Naive thymus-derived CD4-positive, alpha-beta T cell (primary cell): ENCODE measurements at regions of chr17 and their contacts with region 1.

Region 1: GRCh38 chr17:21043286-21044232 is 748 bp upstream of the USP22 start:
- DNase-seq: peak; percentile 87 to 99 (median 96)
- ATAC-seq: peak; percentile 88
- H3K4me3 ChIP-seq: peak overlapping the region; percentile 73
- H3K4me3 Mint-ChIP-seq: peak overlapping the region; percentile 75 to 96 (median 86)
- H3K27ac ChIP-seq: peak overlapping the region; percentile 91
- H3K27ac Mint-ChIP-seq: peak overlapping the region; percentile 90 to 97 (median 93)
- H3K4me1 ChIP-seq: peaks cover 12 to 22% of the 10 kb centered on the region in 2 donors
- H3K4me1 Mint-ChIP-seq: peaks cover 15 to 40% (median 31%) of the 10 kb centered on the region in 7 donors
- H3K27me3 ChIP-seq: no peaks in the 10 kb centered on the region
- H3K27me3 Mint-ChIP-seq: peaks cover 0 to 4% (median 0%) of the 10 kb centered on the region in 5 donors

Region 2: GRCh38 chr17:19377602-19378392 is 1665.8 kb before region 1 on chr17:
- CTCF ChIA-PET with region 1: no interaction called
- POLR2A ChIA-PET with region 1: no interaction called
- intact Hi-C with region 1: loop called in 1 of 2 experiments (anchors 5 kb)
- DNase-seq: peak; percentile 85 to 95 (median 92)
- ATAC-seq: peak; percentile 89
- H3K4me3 ChIP-seq: peak overlapping the region; percentile 99
- H3K4me3 Mint-ChIP-seq: peak overlapping the region; percentile 83 to 100 (median 97)
- H3K27ac ChIP-seq: peak overlapping the region; percentile 81
- H3K27ac Mint-ChIP-seq: peak overlapping the region; percentile 83 to 99 (median 97)
- H3K4me1 ChIP-seq: peaks cover 2 to 6% of the 10 kb centered on the region in 2 donors
- H3K4me1 Mint-ChIP-seq: peaks cover 6 to 29% (median 20%) of the 10 kb centered on the region in 7 donors
- H3K27me3 ChIP-seq: no peaks in the 10 kb centered on the region
- H3K27me3 Mint-ChIP-seq: no peaks in the 10 kb centered on the region

Region 3: GRCh38 chr17:20944014-20944865 is 99.3 kb before region 1 on chr17:
- CTCF ChIA-PET with region 1: no interaction called
- POLR2A ChIA-PET with region 1: no interaction called
- intact Hi-C with region 1: loop called in 1 of 2 experiments (anchors 1 kb)
- DNase-seq: peak in 5 of 9 donors; percentile 23 to 36 (median 25)
- ATAC-seq: peak; percentile 69
- H3K4me3 ChIP-seq: no peak overlapping the region
- H3K4me3 Mint-ChIP-seq: no peak overlapping the region
- H3K27ac ChIP-seq: no peak overlapping the region
- H3K27ac Mint-ChIP-seq: peak overlapping the region in 1 of 9 donors; percentile 29
- H3K4me1 ChIP-seq: no peaks in the 10 kb centered on the region
- H3K4me1 Mint-ChIP-seq: peaks cover 0 to 4% (median 0%) of the 10 kb centered on the region in 7 donors
- H3K27me3 ChIP-seq: no peaks in the 10 kb centered on the region
- H3K27me3 Mint-ChIP-seq: peaks cover 0 to 13% (median 5%) of the 10 kb centered on the region in 5 donors

Region 4: DNA sequence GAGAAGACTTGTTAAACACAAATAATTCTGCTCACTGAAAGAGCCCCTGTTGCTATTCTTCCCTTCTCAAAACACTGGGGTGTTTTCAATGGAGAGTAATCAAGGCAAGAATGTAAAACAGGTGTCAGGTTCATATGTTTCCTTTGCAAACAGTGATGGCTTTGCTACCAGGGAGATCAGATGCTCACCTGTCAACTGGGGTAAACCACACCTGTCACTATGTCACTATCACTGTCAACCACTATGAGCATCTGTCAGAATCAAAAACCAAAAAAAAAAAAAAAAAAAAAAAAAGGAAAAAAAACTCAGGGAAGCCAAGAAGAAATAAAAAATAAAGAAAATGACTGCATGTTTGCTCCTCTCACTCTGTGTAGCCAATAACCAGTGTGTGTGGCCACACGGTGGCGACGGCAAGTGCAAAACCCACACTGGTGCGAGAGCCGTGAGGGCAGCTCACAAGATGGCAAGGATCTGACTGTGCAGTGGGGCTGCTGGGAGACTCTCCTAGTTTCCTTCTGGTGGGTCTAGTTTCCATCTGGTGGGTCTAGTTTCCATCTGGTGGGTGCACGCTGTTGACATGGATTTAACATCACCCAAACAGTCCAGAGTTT is 23.5 kb before region 1 on chr17:
- CTCF ChIA-PET with region 1: interaction called, 10 read pairs
- POLR2A ChIA-PET with region 1: interaction called, 12 read pairs
- intact Hi-C with region 1: loop called in 1 of 2 experiments (anchors 1 kb)
- DNase-seq: peak in 4 of 9 donors; percentile 24 to 41 (median 30)
- ATAC-seq: peak; percentile 78
- H3K4me3 ChIP-seq: no peak overlapping the region
- H3K4me3 Mint-ChIP-seq: peak overlapping the region in 2 of 10 donors; percentile 32 to 45
- H3K27ac ChIP-seq: no peak overlapping the region
- H3K27ac Mint-ChIP-seq: peak overlapping the region in 5 of 9 donors; percentile 34 to 58 (median 52)
- H3K4me1 ChIP-seq: peaks cover 0 to 9% of the 10 kb centered on the region in 2 donors
- H3K4me1 Mint-ChIP-seq: peaks cover 21 to 56% (median 48%) of the 10 kb centered on the region in 7 donors
- H3K27me3 ChIP-seq: no peaks in the 10 kb centered on the region
- H3K27me3 Mint-ChIP-seq: no peaks in the 10 kb centered on the region

Region 5: GRCh38 chr17:21126645-21127510 is 83.3 kb after region 1 on chr17 and contains the start of gene DHRS7B:
- CTCF ChIA-PET with region 1: interaction called, 4 read pairs
- POLR2A ChIA-PET with region 1: interaction called, 12 read pairs
- intact Hi-C with region 1: loop called (anchors 1 kb)
- DNase-seq: peak; percentile 91 to 97 (median 95)
- ATAC-seq: peak; percentile 90
- H3K4me3 ChIP-seq: peak within 1 kb of the TSS; percentile 86
- H3K4me3 Mint-ChIP-seq: peak within 1 kb of the TSS; percentile 90 to 100 (median 97)
- H3K27ac ChIP-seq: peak within 1 kb of the TSS; percentile 84
- H3K27ac Mint-ChIP-seq: peak within 1 kb of the TSS; percentile 93 to 99 (median 98)
- H3K4me1 ChIP-seq: peaks cover 18 to 19% of the 10 kb centered on the region in 2 donors
- H3K4me1 Mint-ChIP-seq: peaks cover 26 to 58% (median 48%) of the 10 kb centered on the region in 7 donors
- H3K27me3 ChIP-seq: no peaks in the 10 kb centered on the region
- H3K27me3 Mint-ChIP-seq: peaks cover 0 to 10% (median 0%) of the 10 kb centered on the region in 5 donors
- total RNA-seq, gene DHRS7B: 7.5 to 15.1 (median 10.0) TPM

Region 6: GRCh38 chr17:21284319-21285163 is 241.0 kb after region 1 on chr17 and contains the start of gene MAP2K3:
- CTCF ChIA-PET with region 1: no interaction called
- POLR2A ChIA-PET with region 1: interaction called, 4 read pairs
- intact Hi-C with region 1: loop called (anchors 1 kb)
- DNase-seq: peak; percentile 79 to 98 (median 84)
- ATAC-seq: peak; percentile 78
- H3K4me3 ChIP-seq: peak within 1 kb of the TSS; percentile 90
- H3K4me3 Mint-ChIP-seq: peak within 1 kb of the TSS; percentile 88 to 99 (median 96)
- H3K27ac ChIP-seq: peak within 1 kb of the TSS; percentile 78
- H3K27ac Mint-ChIP-seq: peak within 1 kb of the TSS; percentile 88 to 97 (median 96)
- H3K4me1 ChIP-seq: peaks cover 39 to 40% of the 10 kb centered on the region in 2 donors
- H3K4me1 Mint-ChIP-seq: peaks cover 32 to 57% (median 52%) of the 10 kb centered on the region in 7 donors
- H3K27me3 ChIP-seq: no peaks in the 10 kb centered on the region
- H3K27me3 Mint-ChIP-seq: no peaks in the 10 kb centered on the region
- total RNA-seq, gene MAP2K3: 37.5 to 127 (median 39.2) TPM

Region 7: DNA sequence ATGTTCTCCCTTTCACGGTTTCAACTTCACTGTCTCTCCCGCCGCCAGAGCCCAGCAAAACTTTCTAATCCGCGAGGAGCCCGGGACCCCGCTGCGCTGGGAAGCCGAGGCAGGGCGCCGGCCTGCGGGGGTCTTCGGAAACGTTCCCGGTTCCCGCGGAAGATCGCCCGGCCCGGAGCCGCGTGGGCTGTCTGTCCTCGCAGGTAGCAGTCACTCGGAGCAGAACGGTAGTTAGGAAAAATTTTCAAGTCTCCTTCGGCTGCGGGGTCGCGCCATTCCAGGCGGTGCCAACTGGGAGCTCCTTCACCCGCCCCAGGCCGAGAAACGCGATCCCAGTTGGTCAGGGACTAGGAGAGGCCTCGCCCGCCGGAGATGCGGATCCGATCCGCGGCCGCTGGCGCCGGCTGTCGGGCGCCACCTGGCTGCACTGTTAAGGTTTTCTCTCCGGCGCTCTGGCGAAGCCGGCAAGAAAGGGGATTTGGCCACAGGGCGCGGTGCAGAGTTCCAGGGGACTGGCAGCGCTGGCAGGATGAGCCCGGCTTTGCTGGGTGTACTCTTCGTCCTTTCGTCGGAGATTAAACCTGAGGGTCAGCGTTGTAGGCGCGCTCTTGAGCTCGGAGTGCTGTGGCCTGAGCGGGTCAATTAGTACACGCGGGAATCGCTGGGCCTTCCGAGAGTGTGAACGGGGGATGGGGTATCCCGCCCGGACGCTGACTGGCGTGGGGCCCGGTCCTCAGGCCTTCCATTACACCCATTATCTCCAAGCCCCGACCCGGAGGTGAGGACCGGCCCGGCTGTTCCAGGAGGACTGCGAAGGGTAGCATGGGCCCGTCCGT is 468.0 kb after region 1 on chr17:
- CTCF ChIA-PET with region 1: interaction called, 5 read pairs
- POLR2A ChIA-PET with region 1: interaction called, 5 read pairs
- intact Hi-C with region 1: loop called (anchors 1 to 10 kb)
- DNase-seq: peak; percentile 31 to 68 (median 52)
- ATAC-seq: peak; percentile 86
- H3K4me3 ChIP-seq: peak overlapping the region; percentile 62
- H3K4me3 Mint-ChIP-seq: peak overlapping the region; percentile 54 to 82 (median 72)
- H3K27ac ChIP-seq: no peak overlapping the region
- H3K27ac Mint-ChIP-seq: peak overlapping the region in 3 of 9 donors; percentile 1 to 52 (median 38)
- H3K4me1 ChIP-seq: peaks cover 6 to 9% of the 10 kb centered on the region in 2 donors
- H3K4me1 Mint-ChIP-seq: peaks cover 0 to 21% (median 6%) of the 10 kb centered on the region in 7 donors
- H3K27me3 ChIP-seq: peaks cover 4 to 6% of the 10 kb centered on the region in 2 donors
- H3K27me3 Mint-ChIP-seq: peaks cover 22 to 67% (median 32%) of the 10 kb centered on the region in 5 donors